ENCODE measurements at regions of chr1 and their contacts with region 1.

Region 1: DNA sequence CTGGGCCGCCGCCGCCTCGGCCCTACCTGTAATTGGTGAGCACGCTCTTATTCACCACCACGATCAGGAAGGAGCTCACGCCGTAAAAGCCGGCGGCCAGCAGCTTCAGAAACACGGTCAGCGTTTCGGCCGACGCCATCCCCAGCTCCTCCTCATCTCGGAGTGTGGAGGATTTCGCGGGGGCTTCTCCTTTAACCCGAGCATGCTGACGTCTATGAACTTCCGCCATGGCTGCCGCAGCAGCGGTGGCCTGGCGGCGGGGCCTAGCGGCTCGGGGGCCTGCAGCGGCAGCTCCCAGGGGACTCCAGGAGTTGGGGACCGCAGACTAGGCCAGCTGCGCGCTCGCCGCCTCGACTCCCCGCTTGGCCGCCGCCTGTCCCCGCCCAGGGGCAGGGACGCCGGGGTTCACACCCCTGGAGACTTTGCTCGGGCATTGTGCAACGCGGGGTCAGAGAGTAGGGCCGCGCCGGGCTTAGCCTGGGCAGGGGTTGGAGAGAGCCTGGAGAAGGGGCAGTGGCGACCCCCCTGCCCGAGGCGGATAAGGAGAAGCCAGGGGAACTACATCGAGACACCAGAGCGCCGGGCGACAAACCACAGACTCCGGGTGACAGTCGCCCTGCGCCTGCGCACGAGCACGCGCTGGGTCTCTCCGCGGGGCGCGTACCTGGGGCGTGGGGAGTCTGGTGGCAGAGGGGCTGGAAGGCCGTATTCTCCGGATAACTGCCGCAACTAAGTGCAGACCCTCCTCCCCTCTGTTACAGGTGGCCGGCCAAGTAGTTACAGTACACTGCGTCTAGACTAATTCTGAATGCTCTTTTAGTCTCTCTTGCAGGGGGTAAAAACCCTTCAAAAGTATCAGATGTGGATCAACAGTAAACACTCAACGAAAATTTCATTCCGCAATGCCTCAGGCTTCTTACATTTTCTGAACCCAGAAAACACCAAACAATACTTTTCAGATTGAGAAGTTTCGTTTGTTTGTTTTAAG is at the start of gene SLC35D1:
- DNase-seq: peak; percentile 75
- H3K4me3 Mint-ChIP-seq: peak within 1 kb of the TSS; percentile 93
- H3K27ac Mint-ChIP-seq: peak within 1 kb of the TSS; percentile 94
- H3K4me1 Mint-ChIP-seq: peaks cover 49% of the 10 kb centered on the region
- H3K27me3 Mint-ChIP-seq: peaks cover 6% of the 10 kb centered on the region
- total RNA-seq, gene SLC35D1: 20.4 and 20.5 TPM in 2 replicates

Region 2: DNA sequence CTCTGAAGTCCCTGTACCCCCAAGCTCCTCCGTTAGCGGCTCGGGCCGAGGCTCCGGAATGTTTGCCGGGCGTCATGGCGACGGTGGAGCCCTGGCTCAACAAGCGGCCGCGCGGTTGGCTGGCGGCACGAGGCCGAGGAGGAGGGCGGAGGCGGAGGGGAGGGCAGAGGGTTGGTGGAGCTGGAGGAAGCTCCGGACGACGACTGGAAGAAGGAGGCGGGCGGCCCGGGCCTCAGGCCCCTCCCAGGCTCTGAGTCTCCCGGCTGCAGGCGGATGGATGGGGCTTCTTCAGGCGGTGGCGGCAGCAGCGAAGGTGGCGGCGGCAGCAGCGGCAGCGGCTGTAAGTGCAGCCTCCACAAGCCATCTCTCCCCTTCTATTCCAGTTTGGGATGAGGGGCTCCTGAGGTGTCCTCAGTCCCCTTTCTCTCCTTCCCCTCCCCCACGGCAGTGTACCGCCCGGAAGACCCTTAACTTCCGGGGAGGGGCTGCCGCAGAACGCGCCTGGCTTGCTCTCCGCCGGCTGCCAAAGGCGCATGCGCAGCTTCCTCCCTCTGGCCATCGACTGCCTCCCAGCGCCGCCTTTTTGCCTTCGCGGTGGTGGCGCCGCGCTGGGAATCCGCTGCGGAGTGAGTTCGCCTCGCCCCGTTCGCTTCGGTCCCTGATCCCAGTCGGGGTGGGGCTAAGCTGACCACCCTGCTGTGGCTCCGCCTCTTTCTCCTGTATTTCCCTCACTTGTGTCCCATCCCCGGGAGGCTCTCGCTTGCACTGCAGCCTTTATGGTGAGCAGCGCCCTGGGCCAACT is 129.1 kb before region 1 on chr1 and contains the starts of genes DNAI4 and MIER1:
- intact Hi-C with region 1: loop called (anchors 2 kb)
- DNase-seq: peak; percentile 98
- H3K4me3 Mint-ChIP-seq: peak within 1 kb of the TSS; percentile 93
- H3K27ac Mint-ChIP-seq: peak within 1 kb of the TSS; percentile 97
- H3K4me1 Mint-ChIP-seq: peaks cover 66% of the 10 kb centered on the region
- H3K27me3 Mint-ChIP-seq: no peaks in the 10 kb centered on the region
- total RNA-seq, gene DNAI4: 1.2 and 3.2 TPM in 2 replicates
- total RNA-seq, gene MIER1: 53.2 and 57.4 TPM in 2 replicates

Region 3: DNA sequence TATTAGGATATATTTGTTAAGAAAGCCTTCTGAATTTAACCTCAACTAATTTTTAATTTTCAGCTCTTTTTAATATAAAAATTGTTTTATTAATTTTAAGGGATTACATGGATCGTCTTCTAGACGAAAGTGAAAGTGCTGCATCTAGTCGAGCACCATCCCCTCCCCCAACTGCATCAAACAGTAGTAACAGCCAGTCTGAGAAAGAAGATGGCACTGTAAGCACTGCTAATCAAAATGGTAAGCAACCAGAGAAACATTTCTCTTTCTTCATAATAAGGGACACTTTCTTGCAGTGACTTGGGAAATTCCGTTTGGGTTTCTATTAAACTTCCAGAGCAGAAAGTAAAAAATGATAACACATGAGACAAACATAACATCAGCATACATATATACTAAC is 72.4 kb before region 1 on chr1:
- intact Hi-C with region 1: loop called (anchors 5 kb)
- DNase-seq: peak; percentile 40
- H3K4me3 Mint-ChIP-seq: peak overlapping the region; percentile 69
- H3K27ac Mint-ChIP-seq: peak overlapping the region; percentile 75
- H3K4me1 Mint-ChIP-seq: peaks cover 35% of the 10 kb centered on the region
- H3K27me3 Mint-ChIP-seq: no peaks in the 10 kb centered on the region

Region 4: DNA sequence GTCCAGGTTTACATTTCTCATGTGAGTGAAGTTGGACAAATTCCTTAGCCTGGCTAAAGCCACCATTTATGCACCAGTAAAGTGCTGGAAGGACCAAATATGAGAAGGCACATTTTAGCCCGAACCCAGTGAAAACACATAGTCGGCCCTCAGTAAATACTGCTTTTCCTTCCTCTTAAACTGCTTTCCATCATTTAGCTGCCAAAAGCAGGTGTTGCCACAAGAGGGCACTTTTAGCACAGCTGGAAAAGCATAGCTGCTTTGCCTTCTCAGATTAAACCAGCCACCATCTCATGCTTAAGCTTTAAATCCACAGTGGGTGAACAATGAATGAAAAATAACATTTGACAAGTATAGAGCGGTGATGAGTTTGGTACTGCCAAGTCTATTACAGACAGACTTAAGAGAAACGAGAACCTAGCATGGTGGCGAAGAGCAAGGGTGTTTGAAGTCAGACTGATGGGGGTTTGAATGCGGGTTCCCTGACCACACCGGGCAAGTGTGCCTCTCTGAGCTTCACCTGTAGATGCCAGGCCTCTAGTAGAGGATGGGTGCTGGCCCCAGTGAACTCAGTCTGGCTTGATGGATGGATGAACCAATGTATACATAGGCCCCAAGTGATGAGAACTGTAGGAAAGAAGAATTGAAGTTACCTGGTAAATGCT is 57.9 kb before region 1 on chr1:
- intact Hi-C with region 1: loop called (anchors 2 kb)
- DNase-seq: peak; percentile 56
- H3K4me3 Mint-ChIP-seq: no peak overlapping the region
- H3K27ac Mint-ChIP-seq: peak overlapping the region; percentile 45
- H3K4me1 Mint-ChIP-seq: peaks cover 22% of the 10 kb centered on the region
- H3K27me3 Mint-ChIP-seq: no peaks in the 10 kb centered on the region

Region 5: GRCh38 chr1:67149179-67149770 is 95.2 kb after region 1 on chr1:
- intact Hi-C with region 1: loop called (anchors 1 kb)
- DNase-seq: peak; percentile 42
- H3K4me3 Mint-ChIP-seq: no peak overlapping the region
- H3K27ac Mint-ChIP-seq: peak overlapping the region; percentile 40
- H3K4me1 Mint-ChIP-seq: peaks cover 56% of the 10 kb centered on the region
- H3K27me3 Mint-ChIP-seq: no peaks in the 10 kb centered on the region

Region 6: GRCh38 chr1:67194209-67194863 is 140.3 kb after region 1 on chr1:
- intact Hi-C with region 1: loop called (anchors 5 kb)
- DNase-seq: no peak
- H3K4me3 Mint-ChIP-seq: no peak overlapping the region
- H3K27ac Mint-ChIP-seq: no peak overlapping the region
- H3K4me1 Mint-ChIP-seq: peaks cover 38% of the 10 kb centered on the region
- H3K27me3 Mint-ChIP-seq: no peaks in the 10 kb centered on the region

Region 7: GRCh38 chr1:67500413-67500959 is 446.4 kb after region 1 on chr1:
- intact Hi-C with region 1: loop called (anchors 2 kb)
- DNase-seq: peak; percentile 84
- H3K4me3 Mint-ChIP-seq: no peak overlapping the region
- H3K27ac Mint-ChIP-seq: no peak overlapping the region
- H3K4me1 Mint-ChIP-seq: peaks cover 9% of the 10 kb centered on the region
- H3K27me3 Mint-ChIP-seq: peaks cover 9% of the 10 kb centered on the region

Measured in activated T-helper 1 cell treated with anti-CD3 and anti-CD28 coated beads, Interleukin-12 subunit alpha, Interleukin-12 subunit beta, Interleukin-2, Interleukin-4 antibody, amounts not matched to agents 30 ng/mL and 10 ng/mL and 1 ng/mL, durations not matched to agents 14 hours and 24 hours and 36 hours (primary cell).